ENCODE measurements at regions of chr2 and their contacts with region 1.

Region 1: GRCh38 chr2:72862239-72862988 is 24.8 kb upstream of the SPR start:
- DNase-seq: peak; percentile 94
- H3K4me3 ChIP-seq: peak overlapping the region; percentile 38
- H3K27ac ChIP-seq: no peak overlapping the region
- H3K4me1 ChIP-seq: no peaks in the 10 kb centered on the region
- H3K27me3 ChIP-seq: peaks cover 4% of the 10 kb centered on the region
- CTCF ChIP-seq: peak; percentile 99

Region 2: GRCh38 chr2:71530641-71531332 is 1331.6 kb before region 1 on chr2:
- CTCF ChIA-PET with region 1: interaction called, 10 read pairs
- POLR2A ChIA-PET with region 1: no interaction called
- intact Hi-C with region 1: no loop called
- DNase-seq: peak; percentile 75
- H3K4me3 ChIP-seq: no peak overlapping the region
- H3K27ac ChIP-seq: no peak overlapping the region
- H3K4me1 ChIP-seq: no peaks in the 10 kb centered on the region
- H3K27me3 ChIP-seq: no peaks in the 10 kb centered on the region
- CTCF ChIP-seq: peak; percentile 76

Region 3: DNA sequence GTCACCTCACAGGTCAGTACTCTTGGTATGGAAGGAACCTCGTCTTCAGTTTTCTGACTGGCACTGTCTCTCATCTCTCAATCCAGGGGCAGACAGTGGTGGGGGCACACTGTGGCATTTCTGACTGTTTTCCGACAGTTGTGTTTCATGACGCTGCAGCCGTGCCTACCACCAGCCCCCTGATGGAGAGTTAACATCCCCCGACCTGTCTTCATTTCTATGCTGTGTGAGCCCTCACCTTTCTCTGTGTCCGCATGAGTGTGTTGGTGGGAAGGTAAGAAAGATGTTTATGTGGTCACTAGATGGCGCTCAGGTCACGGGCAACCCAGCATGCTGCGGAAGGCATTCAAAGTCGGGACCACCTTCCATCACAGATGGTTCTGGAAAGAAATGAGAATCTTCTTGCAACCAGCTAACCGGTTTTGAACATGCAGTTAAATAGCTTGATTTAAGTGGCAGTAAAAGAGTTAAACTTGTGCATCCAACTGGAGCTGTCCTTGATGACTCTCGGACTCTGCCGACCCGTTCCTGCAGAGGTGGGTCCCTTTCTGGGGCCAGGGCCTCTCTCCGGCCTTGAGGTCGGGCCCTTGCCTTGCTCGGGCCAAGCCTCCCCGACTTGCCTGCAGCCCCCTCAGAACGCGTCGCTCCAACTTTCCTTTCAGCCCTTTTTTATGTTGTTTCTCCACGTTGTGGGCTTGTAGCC is 1316.7 kb before region 1 on chr2:
- CTCF ChIA-PET with region 1: no interaction called
- POLR2A ChIA-PET with region 1: no interaction called
- intact Hi-C with region 1: loop called (anchors 5 kb)
- DNase-seq: peak; percentile 80
- H3K4me3 ChIP-seq: peak overlapping the region; percentile 25
- H3K27ac ChIP-seq: no peak overlapping the region
- H3K4me1 ChIP-seq: peaks cover 4% of the 10 kb centered on the region
- H3K27me3 ChIP-seq: no peaks in the 10 kb centered on the region
- CTCF ChIP-seq: peak; percentile 84

Region 4: DNA sequence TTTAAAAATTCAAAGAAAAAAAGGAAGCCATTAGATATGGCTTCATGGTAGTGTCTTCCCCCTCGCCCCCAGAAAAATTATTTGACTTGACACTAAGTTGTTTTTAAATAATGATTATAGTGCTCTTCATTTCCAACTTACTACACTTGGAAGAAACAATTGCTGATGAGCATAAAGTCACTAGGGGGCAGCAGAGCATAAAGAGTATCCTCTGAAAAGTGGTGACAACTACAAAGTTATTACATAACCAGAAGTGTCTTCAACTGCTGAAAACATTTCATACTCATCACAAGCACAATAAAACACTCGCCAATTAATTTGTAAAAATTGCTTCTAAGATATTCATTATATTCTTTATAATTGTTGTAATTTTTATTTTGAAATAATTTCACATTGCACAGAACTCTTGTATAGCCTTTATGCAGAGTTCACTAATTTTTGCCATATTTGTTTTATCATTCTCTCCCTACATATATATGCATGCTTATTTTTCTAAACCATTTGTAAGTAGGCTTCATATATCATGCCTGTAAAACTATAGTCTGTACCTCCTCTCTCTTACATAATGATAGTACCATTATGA is 91.4 kb before region 1 on chr2:
- CTCF ChIA-PET with region 1: interaction called, 6 read pairs
- POLR2A ChIA-PET with region 1: no interaction called
- intact Hi-C with region 1: loop called (anchors 1 kb)
- DNase-seq: peak; percentile 82
- H3K4me3 ChIP-seq: no peak overlapping the region
- H3K27ac ChIP-seq: no peak overlapping the region
- H3K4me1 ChIP-seq: no peaks in the 10 kb centered on the region
- H3K27me3 ChIP-seq: no peaks in the 10 kb centered on the region
- CTCF ChIP-seq: peak; percentile 87

Region 5: DNA sequence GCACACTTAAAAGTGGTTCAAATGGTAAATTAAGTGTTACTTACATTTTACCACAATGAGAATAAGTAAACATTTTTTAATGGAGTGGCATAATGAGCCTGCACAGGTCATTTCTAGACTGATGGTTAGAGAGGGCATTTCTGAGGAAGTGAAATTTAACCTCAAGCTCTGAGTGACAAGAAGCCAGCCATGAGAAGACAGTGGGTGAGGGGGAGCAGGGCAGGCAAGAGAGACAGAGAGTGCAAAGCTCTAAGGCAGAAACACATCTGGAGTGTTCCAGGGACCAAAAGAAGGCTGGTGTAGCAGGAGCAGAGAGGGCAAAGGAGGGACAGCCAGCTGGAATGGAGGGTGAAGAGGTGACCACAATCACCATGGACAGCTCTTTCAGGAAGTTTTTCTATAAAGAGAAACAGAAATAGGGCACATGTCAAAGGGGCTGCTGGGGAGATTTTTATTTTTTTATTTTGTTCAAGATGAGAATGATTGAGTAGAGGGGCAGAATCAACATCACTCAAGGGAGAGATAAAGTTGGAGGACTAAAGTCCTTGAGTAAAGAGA is 15.8 kb before region 1 on chr2:
- CTCF ChIA-PET with region 1: interaction called, 11 read pairs
- POLR2A ChIA-PET with region 1: no interaction called
- intact Hi-C with region 1: no loop called
- DNase-seq: no peak
- H3K4me3 ChIP-seq: no peak overlapping the region
- H3K27ac ChIP-seq: no peak overlapping the region
- H3K4me1 ChIP-seq: no peaks in the 10 kb centered on the region
- H3K27me3 ChIP-seq: no peaks in the 10 kb centered on the region
- CTCF ChIP-seq: no peak